Mammary epithelial cell (primary cell): ENCODE measurements at regions of chrX and their contacts with region 1.

Region 1: GRCh38 chrX:22526339-22526738 is 253.6 kb downstream of the CBLL2 start:
- DNase-seq: peak; percentile 93
- H3K4me3 ChIP-seq: no peak overlapping the region
- H3K27ac ChIP-seq: peak overlapping the region; percentile 95
- H3K4me1 ChIP-seq: peaks cover 14% of the 10 kb centered on the region
- H3K27me3 ChIP-seq: no peaks in the 10 kb centered on the region
- CTCF ChIP-seq: no peak

Region 2: GRCh38 chrX:22365460-22365859 is 160.9 kb before region 1 on chrX:
- CTCF ChIA-PET with region 1: no interaction called
- dilution Hi-C with region 1: no loop called
- in situ Hi-C with region 1: no loop called
- intact Hi-C with region 1: loop called (anchors 10 kb)
- DNase-seq: peak; percentile 95
- H3K4me3 ChIP-seq: no peak overlapping the region
- H3K27ac ChIP-seq: peak overlapping the region; percentile 61
- H3K4me1 ChIP-seq: peaks cover 10% of the 10 kb centered on the region
- H3K27me3 ChIP-seq: no peaks in the 10 kb centered on the region
- CTCF ChIP-seq: no peak

Region 3: DNA sequence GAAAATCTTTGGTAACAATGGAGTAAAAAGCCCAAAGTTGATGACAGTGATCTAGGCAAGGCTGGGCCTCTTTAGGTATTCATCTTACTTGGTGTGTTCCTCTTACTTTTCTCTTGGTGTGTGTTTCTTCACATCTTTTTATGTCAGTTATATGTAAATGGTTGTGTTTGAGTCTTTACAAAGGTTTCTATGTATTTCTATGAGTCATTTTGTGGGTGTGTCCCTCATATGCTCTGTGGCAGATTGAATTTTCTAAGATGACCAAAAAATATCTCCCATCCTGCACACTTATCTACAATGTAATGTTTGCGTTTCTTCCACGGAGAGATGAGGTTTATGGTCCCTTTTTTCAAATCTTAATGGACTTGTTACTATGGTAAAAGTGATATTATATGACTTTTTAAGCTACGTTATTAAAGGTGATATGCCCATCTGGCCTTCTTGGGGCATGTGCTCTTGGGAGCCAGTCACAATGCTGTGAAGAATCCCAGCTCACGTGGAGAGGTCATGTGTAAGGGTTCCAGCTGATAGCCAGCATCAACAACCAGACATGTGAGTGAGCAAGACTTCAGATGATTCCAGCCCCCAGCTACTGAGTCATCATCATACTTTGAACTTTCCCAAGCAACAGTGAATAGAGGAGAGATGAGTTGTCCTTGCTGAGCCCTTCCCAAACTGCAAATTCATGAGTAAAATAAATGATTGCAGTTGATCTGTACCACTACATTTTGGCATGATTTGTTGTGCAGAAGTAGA is 126.7 kb before region 1 on chrX:
- CTCF ChIA-PET with region 1: no interaction called
- dilution Hi-C with region 1: no loop called
- in situ Hi-C with region 1: no loop called
- intact Hi-C with region 1: loop called (anchors 2 kb)
- DNase-seq: peak; percentile 82
- H3K4me3 ChIP-seq: no peak overlapping the region
- H3K27ac ChIP-seq: peak overlapping the region; percentile 78
- H3K4me1 ChIP-seq: peaks cover 10% of the 10 kb centered on the region
- H3K27me3 ChIP-seq: no peaks in the 10 kb centered on the region
- CTCF ChIP-seq: no peak

Region 4: GRCh38 chrX:22788221-22788620 is 261.9 kb after region 1 on chrX:
- CTCF ChIA-PET with region 1: no interaction called
- dilution Hi-C with region 1: no loop called
- in situ Hi-C with region 1: no loop called
- intact Hi-C with region 1: no loop called
- DNase-seq: no peak
- H3K4me3 ChIP-seq: no peak overlapping the region
- H3K27ac ChIP-seq: no peak overlapping the region
- H3K4me1 ChIP-seq: no peaks in the 10 kb centered on the region
- H3K27me3 ChIP-seq: peaks cover 2% of the 10 kb centered on the region
- CTCF ChIP-seq: no peak